ENCODE measurements at regions of chr3 and their contacts with region 1.

Region 1: GRCh38 chr3:36729204-36730056 is 34.9 kb downstream of the DCLK3 start:
- DNase-seq: peak; percentile 40
- CTCF ChIP-seq: peak; percentile 67

Region 2: DNA sequence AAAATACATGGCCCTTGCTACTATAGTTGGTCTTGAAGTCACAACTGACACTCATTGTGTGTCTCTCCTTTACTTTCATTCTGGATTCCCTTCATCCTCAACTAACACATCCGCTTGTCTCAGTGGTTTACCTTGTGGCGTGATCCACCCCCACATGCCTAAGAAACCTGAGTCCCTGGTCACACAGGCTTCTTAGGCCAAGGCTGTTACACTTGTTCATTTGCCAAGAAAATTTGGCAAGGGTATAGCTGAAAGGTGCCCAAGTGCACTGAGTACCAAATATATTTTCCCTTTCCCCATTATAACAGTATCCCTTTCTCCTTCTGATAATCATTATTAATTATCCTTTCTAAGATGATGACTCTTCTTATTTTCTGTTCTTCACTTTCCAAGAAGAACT is 556.7 kb before region 1 on chr3:
- in situ Hi-C with region 1: no loop called
- DNase-seq: no peak
- CTCF ChIP-seq: no peak

Region 3: DNA sequence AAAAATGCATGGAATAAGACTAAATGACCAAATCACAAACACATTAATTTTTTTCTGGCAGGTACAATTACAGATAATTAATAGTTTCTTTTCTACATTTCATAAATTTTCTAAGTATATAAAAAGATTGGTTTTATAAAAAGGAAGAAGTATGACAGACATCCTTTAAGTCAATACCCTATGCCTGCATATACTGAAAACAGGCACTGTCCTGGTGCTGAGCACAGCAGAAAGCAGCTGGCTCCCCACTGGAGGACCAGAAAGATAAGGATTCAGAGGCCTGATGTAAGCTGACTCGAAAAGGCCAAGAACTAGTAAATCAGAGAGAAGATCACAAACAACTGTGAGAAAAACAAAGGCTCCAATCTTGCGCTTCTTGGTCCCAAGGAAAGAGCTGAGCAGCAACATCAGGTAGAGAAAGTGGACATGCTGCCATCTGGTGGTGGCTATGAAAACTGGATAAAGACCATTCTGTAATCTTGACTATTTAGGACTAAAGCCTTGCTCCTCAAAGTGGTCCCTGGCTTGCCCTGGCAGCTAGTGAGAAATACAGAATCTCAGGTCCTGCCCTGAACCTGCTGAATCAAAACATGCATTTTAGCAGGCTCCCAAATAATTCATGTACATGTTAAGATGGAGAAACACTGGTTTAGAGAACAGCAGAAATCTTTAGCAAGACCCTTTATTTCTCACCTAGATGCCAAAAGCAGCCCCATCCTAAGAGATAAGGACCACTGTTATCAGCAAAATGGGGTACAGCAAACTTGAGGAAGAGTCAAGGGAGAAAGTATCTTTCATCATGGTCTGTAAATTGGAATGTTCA is 139.4 kb after region 1 on chr3:
- in situ Hi-C with region 1: no loop called
- DNase-seq: peak; percentile 62
- CTCF ChIP-seq: peak; percentile 75

Region 4: GRCh38 chr3:36957862-36958686 is 228.6 kb after region 1 on chr3:
- in situ Hi-C with region 1: loop called (anchors 10 kb)
- DNase-seq: no peak
- CTCF ChIP-seq: no peak

Region 5: DNA sequence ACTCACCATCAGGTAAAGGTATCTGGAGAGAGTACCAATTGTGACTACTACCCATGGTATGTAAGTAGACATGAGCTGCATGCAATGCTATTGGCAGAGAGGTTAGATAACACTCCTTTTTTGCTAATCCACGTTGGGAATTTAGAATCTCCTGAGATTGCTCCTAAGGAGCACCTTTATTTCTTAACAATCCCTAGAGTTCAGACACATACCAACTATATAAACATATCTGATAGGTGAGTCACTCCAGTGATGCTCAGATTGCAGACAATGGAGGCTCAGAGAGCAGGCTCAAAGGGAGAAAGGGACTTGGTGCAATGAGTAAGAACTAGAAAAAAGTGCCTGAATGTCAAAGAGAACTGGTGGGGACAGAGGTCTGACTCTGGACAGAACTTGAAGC is 492.0 kb after region 1 on chr3:
- in situ Hi-C with region 1: loop called (anchors 25 kb)
- DNase-seq: no peak
- CTCF ChIP-seq: no peak